Aorta (tissue), 5 donors: ENCODE measurements at regions of chr4 and their contacts with region 1.

Region 1: DNA sequence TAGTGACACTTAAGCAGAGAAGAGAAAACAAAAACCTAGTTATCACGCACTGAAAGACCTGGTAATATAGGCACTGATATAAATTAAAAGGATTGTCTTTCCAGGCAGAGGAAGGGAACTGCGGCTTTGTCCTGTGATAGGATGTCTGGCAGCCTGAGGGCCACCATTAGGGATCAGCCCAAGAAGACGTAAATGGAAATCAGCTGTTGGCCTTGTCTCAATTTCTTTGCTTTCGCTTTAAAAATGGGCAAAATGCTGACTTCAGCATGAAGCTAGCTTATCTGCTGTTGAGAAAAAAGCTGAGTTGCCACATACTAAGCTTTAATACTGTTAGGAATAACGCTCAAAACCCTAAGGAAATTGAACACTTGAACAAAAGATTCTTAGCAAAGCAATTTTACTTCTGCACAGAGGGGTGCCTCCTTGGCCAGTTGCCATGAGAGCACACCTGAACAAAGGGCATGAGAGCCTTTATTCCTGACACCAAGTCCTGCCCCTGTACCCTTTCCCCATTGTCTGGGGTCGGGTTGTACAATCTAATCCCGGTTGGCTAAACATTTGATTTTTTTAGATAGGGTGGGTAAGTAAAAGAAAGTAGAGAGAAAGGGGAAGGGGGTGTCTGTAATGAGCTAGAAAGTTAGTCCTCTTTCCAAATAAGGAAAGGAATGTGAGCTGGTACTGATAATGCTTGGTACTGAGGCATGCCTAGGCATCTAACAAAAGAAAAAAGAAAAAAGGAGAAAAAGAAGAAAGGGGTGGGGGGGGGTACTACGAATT is 85.1 kb upstream of the UCP1 start:
- DNase-seq: no peak
- ATAC-seq: peak; percentile 83
- H3K4me3 ChIP-seq: peak overlapping the region; percentile 37 to 56
- H3K27ac ChIP-seq: no peak overlapping the region
- H3K4me1 ChIP-seq: no peaks in the 10 kb centered on the region
- H3K27me3 ChIP-seq: no peaks in the 10 kb centered on the region

Region 2: GRCh38 chr4:140756319-140757231 is 102.7 kb after region 1 on chr4 and contains the start of gene TBC1D9:
- intact Hi-C with region 1: loop called in 1 of 2 experiments (anchors 10 kb)
- DNase-seq: peak; percentile 87 to 90
- ATAC-seq: peak; percentile 88
- H3K4me3 ChIP-seq: peak within 1 kb of the TSS; percentile 69 to 71
- H3K27ac ChIP-seq: peak within 1 kb of the TSS in 1 of 2 donors; percentile 43
- H3K4me1 ChIP-seq: no peaks in the 10 kb centered on the region
- H3K27me3 ChIP-seq: no peaks in the 10 kb centered on the region
- total RNA-seq, gene TBC1D9: 18.5 to 28.8 TPM

Region 3: GRCh38 chr4:140903522-140904475 is 249.9 kb after region 1 on chr4:
- intact Hi-C with region 1: no loop called
- DNase-seq: no peak
- ATAC-seq: no peak
- H3K4me3 ChIP-seq: no peak overlapping the region
- H3K27ac ChIP-seq: no peak overlapping the region
- H3K4me1 ChIP-seq: no peaks in the 10 kb centered on the region
- H3K27me3 ChIP-seq: no peaks in the 10 kb centered on the region